ENCODE measurements at regions of chr19 and their contacts with region 1.

Region 1: DNA sequence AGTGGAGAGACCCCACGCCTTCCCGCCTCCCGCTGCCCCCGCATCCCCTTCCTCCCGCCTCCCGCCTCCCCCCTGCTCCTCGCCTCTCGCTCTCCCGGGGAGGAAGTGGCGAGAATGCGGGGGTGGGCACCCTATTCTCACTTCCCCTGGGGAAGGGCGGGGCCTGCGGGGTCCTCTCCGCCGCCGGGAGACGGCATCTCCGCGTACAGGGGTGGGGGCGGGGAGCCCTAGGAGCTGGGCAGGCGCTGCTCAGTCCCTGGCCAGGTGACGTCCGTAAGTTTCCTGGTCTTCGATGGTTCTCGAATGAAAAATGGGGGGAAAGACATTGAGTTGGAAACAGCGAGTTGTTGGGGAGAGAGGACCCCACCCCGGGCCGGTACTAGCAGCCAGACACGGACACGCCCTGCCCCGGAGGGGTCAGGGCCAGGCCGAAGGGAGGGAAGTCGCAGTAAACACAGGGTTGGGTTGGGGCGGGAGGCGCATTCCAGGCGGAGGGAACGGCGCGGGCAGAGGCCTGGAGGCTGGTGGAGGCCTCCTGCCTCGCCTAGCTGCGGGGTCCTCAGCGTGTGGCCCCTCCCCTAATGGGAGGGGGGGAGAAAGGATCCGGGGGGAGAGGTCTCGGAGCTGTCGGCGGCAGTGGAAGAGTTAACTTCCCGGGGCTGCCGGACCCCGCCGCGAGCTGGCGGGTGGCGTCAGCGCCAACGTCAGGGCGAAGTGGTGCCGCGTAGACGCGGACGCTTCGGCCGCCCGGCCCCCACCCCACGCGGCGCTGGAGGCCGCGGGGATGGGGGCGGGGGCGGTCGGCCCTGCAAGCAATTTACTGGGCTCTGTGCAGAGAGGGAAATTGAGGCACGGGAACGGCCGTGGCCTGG is 10.4 kb upstream of the JUND start:
- DNase-seq: peak; percentile 75 to 89 (median 81)
- H3K4me3 ChIP-seq: peak overlapping the region; percentile 86
- H3K4me3 Mint-ChIP-seq: peak overlapping the region; percentile 80 to 95 (median 90)
- H3K27ac ChIP-seq: peak overlapping the region; percentile 99
- H3K27ac Mint-ChIP-seq: peak overlapping the region; percentile 96 to 99 (median 97)
- H3K4me1 ChIP-seq: peaks cover 52% of the 10 kb centered on the region
- H3K4me1 Mint-ChIP-seq: peaks cover 41 to 62% (median 61%) of the 10 kb centered on the region in 3 donors
- H3K27me3 ChIP-seq: no peaks in the 10 kb centered on the region
- H3K27me3 Mint-ChIP-seq: peaks cover 0 to 3% of the 10 kb centered on the region in 2 donors

Region 2: GRCh38 chr19:18304458-18305310 is 12.9 kb after region 1 on chr19:
- CTCF ChIA-PET with region 1: interaction called, 35 read pairs
- POLR2A ChIA-PET with region 1: interaction called, 46 read pairs
- DNase-seq: peak; percentile 74 to 93 (median 78)
- H3K4me3 ChIP-seq: peak overlapping the region; percentile 81
- H3K4me3 Mint-ChIP-seq: peak overlapping the region; percentile 89 to 96 (median 92)
- H3K27ac ChIP-seq: peak overlapping the region; percentile 94
- H3K27ac Mint-ChIP-seq: peak overlapping the region; percentile 94 to 99 (median 99)
- H3K4me1 ChIP-seq: peaks cover 52% of the 10 kb centered on the region
- H3K4me1 Mint-ChIP-seq: peaks cover 36 to 55% (median 40%) of the 10 kb centered on the region in 3 donors
- H3K27me3 ChIP-seq: no peaks in the 10 kb centered on the region
- H3K27me3 Mint-ChIP-seq: peaks cover 0 to 1% of the 10 kb centered on the region in 2 donors

Region 3: DNA sequence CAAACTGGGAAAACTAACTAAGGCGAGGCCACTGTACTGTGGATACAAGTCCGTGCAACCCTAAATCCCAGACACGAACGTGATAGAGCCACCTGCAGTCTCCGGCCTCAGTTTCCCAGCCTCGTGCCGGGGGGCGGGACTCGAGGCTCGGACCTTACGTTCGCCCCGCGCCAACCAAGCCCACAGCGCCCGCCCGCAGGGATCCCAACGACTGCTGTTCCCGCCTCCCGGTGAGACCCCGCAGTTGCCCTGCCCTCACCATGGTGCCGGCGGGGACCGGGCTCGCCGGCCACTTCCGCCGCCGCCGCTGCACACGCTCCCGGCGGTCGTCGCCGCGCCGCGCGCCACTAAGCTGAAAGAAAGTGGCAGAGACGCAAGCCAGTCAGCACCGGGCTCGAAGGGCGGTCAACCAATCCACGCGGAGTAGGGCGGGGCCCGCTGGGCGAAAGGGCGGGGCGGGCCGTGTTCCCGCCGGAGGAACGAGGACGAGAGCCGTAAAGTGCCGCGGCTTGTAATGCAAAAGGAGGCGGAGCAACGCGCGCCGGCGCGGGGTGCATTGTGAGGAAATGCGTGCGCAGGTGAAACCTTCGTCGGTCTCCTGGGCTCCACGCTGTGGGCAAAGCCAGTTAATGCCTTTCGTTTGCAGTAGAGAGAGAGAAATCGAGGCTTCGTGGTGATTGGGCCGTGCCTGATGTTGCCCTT is 31.1 kb after region 1 on chr19 and contains the start of gene LSM4:
- CTCF ChIA-PET with region 1: interaction called, 4 read pairs
- POLR2A ChIA-PET with region 1: interaction called, 30 read pairs
- DNase-seq: peak; percentile 99 to 100 (median 99)
- H3K4me3 ChIP-seq: peak within 1 kb of the TSS; percentile 88
- H3K4me3 Mint-ChIP-seq: peak within 1 kb of the TSS; percentile 78 to 91 (median 83)
- H3K27ac ChIP-seq: peak within 1 kb of the TSS; percentile 91
- H3K27ac Mint-ChIP-seq: peak within 1 kb of the TSS; percentile 89 to 98 (median 98)
- H3K4me1 ChIP-seq: peaks cover 57% of the 10 kb centered on the region
- H3K4me1 Mint-ChIP-seq: peaks cover 45 to 58% (median 53%) of the 10 kb centered on the region in 3 donors
- H3K27me3 ChIP-seq: no peaks in the 10 kb centered on the region
- H3K27me3 Mint-ChIP-seq: no peaks in the 10 kb centered on the region
- total RNA-seq, gene LSM4: 351 to 373 TPM